A549 (cell line): ENCODE measurements at regions of chr11 and their contacts with region 1.

Region 1: GRCh38 chr11:67239783-67240575 is 26.3 kb upstream of the GRK2 start:
- DNase-seq: peak; percentile 93 to 97
- ATAC-seq: peak; percentile 96 to 98
- H3K4me3 ChIP-seq: peak overlapping the region; percentile 69
- H3K27ac ChIP-seq: peak overlapping the region; percentile 80 to 89
- H3K4me1 ChIP-seq: peaks cover 28% of the 10 kb centered on the region
- CTCF ChIP-seq: no peak
- EP300 ChIP-seq: no peak
- POLR2A ChIP-seq: peak; percentile 98
- RAD21 ChIP-seq: no peak

Region 2: DNA sequence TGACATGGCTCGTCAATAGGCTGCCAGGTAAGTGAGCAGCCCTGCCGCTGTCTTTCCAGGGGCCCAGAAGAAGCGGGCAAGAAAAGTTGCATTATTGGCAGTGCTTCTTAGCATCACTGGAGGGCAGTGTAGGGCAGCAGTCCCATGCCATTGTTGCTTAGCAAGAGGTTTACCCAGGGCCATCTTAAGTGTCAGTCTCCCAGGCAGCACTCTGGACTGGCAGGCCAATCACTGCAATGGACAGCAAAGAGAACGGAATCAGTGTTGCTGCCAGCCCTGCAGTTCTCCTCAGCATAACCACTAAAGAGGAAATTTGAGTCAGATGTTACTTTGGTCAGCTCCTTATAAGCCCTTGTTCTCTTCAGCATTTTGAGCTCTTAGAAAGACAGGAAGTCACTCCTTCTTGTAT is 12.9 kb after region 1 on chr11:
- CTCF ChIA-PET with region 1: interaction called, 18 read pairs
- POLR2A ChIA-PET with region 1: interaction called, 7 read pairs
- DNase-seq: peak; percentile 49 to 80
- ATAC-seq: peak; percentile 75 to 82
- H3K4me3 ChIP-seq: no peak overlapping the region
- H3K27ac ChIP-seq: no peak overlapping the region
- H3K4me1 ChIP-seq: no peaks in the 10 kb centered on the region
- CTCF ChIP-seq: peak; percentile 40
- EP300 ChIP-seq: no peak
- POLR2A ChIP-seq: no peak
- RAD21 ChIP-seq: peak; percentile 37 to 50; a peak in 4 of 5 replicates